Activated CD4-positive, alpha-beta T cell treated with anti-CD3 and anti-CD28 coated beads, Interleukin-2, amount 10 ng/mL, durations not matched to agents 24 days and 14 days (primary cell): ENCODE measurements at regions of chr20 and their contacts with region 1.

Region 1: GRCh38 chr20:2451939-2452732 is 18.5 kb downstream of the SNRPB start:
- DNase-seq: peak; percentile 90
- H3K4me3 Mint-ChIP-seq: no peak overlapping the region
- H3K27ac Mint-ChIP-seq: no peak overlapping the region
- H3K4me1 Mint-ChIP-seq: peaks cover 23% of the 10 kb centered on the region
- H3K27me3 Mint-ChIP-seq: peaks cover 6% of the 10 kb centered on the region

Region 2: DNA sequence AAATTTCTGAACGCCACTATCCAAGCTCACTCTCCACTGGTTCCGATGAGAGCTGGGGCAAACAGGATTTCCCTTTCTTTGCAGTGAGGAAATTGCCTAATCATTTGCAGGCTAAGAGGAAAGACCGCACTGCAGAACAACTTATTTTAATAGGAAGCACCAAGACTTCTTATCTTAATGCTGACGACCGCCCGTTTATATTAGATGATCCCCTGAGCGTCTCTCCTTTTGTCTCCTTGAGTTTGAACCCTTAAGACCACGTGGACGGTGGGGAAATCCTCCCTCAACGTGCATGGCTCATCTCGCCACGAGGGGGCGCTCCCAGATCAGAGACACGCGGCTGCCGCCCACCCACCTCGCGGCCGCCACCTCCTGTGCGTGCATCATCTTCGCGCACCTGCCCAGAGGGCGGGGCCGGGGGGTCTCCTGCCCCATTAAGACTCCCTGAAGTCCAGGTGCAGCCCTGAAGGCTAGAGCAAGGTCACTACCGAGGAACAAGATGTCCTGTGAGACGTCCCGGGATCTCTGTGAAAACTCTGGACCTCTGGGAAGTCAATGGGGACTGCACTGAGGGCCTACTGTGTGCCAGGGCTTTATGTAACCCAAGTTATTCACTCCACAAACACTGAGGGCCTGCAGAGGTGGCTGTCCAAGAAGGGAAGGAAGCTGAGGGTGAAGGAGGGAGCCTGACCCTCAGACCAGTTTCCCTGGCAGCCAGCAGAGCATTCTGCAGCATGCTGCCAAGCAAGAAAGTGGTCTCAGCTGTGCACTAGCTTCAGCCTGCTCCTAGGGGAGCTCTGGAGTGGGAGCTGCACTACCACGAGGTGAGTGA is 486.4 kb before region 1 on chr20:
- intact Hi-C with region 1: loop called (anchors 5 kb)
- DNase-seq: peak; percentile 91
- H3K4me3 Mint-ChIP-seq: peak overlapping the region; percentile 63
- H3K27ac Mint-ChIP-seq: no peak overlapping the region
- H3K4me1 Mint-ChIP-seq: peaks cover 9% of the 10 kb centered on the region
- H3K27me3 Mint-ChIP-seq: peaks cover 20% of the 10 kb centered on the region

Region 3: DNA sequence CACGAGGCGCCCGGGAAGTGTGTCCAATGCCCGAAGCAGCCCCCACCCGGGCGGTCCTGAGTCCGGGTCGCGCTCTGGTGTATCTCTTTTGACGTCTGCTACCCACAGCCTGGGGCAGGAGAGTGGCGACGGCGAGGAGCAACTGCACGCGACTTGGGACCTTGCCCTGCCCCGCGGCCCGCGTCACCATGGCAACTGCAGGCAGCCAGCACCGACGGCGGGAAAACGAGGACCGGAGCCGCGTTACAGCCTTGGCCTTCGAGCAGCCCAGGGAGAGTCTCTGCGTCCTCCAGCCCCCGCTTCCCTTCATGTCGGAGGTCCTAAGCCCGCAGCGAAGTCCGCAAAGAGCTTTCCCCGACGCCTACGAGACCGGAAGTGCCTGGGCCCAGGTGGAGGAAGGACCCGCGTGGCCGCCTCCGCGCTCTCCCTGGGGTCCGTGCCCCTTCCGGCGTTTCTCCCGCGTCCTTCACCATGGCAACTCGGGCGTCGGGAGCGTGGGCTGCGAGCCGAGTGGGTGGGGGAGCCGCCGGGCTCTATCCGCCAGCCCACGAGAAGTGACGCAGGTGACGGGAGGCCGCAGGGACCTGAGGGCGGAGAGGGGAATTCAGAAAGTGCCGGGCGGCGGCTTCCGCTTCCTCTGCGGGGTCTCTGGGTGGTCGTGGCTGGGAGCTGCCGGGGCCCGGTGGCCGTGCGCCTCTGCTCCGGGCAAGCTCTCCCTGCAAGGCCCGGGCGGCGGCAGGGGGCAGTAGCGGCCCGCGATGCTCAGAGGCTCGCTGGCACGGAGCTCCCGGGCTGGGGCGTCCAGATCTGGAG is 245.0 kb before region 1 on chr20:
- intact Hi-C with region 1: loop called (anchors 5 kb)
- DNase-seq: peak; percentile 88
- H3K4me3 Mint-ChIP-seq: peak overlapping the region; percentile 81
- H3K27ac Mint-ChIP-seq: peak overlapping the region; percentile 83
- H3K4me1 Mint-ChIP-seq: peaks cover 5% of the 10 kb centered on the region
- H3K27me3 Mint-ChIP-seq: peaks cover 18% of the 10 kb centered on the region

Region 4: GRCh38 chr20:2237059-2237458 is 215.1 kb before region 1 on chr20:
- intact Hi-C with region 1: no loop called
- DNase-seq: no peak
- H3K4me3 Mint-ChIP-seq: no peak overlapping the region
- H3K27ac Mint-ChIP-seq: no peak overlapping the region
- H3K4me1 Mint-ChIP-seq: no peaks in the 10 kb centered on the region
- H3K27me3 Mint-ChIP-seq: peaks cover 2% of the 10 kb centered on the region

Region 5: DNA sequence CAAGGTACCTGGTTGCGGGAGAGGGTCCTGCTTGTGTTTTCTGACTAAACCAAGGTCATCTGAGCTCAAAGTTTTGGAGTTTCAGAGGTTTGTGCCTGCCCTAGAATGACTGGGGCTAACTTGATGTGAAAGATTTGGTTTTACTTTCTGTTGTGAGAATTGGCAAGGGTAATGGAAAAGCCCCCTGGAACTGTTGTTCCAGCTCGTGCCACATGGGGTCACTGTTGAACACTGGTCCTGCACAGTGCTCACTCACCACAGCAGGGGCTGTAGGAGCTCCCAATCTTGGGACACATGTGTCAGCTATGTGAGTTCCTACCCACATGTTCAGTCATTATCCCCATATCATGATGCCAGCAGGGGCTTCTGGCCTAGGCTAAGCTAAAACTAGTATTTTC is 65.0 kb before region 1 on chr20:
- intact Hi-C with region 1: loop called (anchors 1 kb)
- DNase-seq: peak; percentile 91
- H3K4me3 Mint-ChIP-seq: peak overlapping the region; percentile 55
- H3K27ac Mint-ChIP-seq: peak overlapping the region; percentile 43
- H3K4me1 Mint-ChIP-seq: peaks cover 6% of the 10 kb centered on the region
- H3K27me3 Mint-ChIP-seq: peaks cover 23% of the 10 kb centered on the region